ENCODE measurements at regions of chr20 and their contacts with region 1.

Region 1: DNA sequence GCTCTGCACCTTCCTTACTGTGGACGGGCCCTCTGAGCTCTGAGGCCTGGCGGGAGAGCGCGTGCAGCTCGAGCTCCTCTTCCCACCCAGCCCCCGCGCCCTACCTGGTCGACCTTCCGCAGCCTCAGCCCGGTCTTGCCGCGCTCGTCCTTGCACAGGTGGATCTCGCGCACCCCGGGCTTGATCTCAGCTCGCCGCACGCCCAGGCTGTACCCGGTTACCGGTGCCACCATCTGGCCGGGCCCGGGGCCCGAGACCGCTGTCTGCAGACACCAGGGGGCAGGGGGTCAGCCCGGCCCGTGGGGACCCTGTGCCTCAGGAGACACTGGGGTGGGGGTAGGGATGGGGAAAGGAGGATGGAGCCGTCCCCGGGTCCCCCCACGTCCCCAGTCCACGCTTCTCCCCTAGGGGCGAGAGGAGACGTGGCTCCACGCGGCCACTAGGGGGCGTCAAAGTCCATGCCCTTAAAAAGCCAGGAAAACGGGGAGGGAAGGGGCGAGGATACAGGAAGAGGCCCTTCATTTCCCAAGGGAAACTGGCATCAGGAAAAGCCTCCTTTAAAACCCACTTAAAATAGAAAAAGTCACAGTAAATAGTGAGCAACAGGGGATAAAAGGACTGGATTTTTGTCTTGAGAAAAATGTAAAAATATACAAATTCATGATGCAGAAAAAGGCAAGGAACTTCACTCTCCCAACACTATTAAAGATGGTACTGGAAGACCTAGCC is 15.5 kb downstream of the SDCBP2 start:
- DNase-seq: peak; percentile 72 to 77

Region 2: GRCh38 chr20:1392823-1393506 is 79.6 kb after region 1 on chr20 and contains the start of gene FKBP1A:
- in situ Hi-C with region 1: no loop called
- DNase-seq: peak; percentile 64 to 95

Region 3: GRCh38 chr20:1466211-1467081 is 153.0 kb after region 1 on chr20 and contains the start of gene NSFL1C:
- in situ Hi-C with region 1: loop called (anchors 25 kb)
- DNase-seq: peak; percentile 88 to 95